ENCODE measurements at regions of chr7 and their contacts with region 1.

Region 1: GRCh38 chr7:23247603-23248335 is 1.2 kb downstream of the GPNMB start:
- DNase-seq: no peak
- H3K4me3 Mint-ChIP-seq: no peak overlapping the region
- H3K27ac Mint-ChIP-seq: no peak overlapping the region
- H3K4me1 Mint-ChIP-seq: peaks cover 18% of the 10 kb centered on the region
- H3K27me3 Mint-ChIP-seq: peaks cover 29% of the 10 kb centered on the region
- CTCF ChIP-seq: no peak

Region 2: GRCh38 chr7:23093546-23093945 is 154.2 kb before region 1 on chr7:
- CTCF ChIA-PET with region 1: no interaction called
- intact Hi-C with region 1: loop called (anchors 10 kb)
- DNase-seq: no peak
- H3K4me3 Mint-ChIP-seq: no peak overlapping the region
- H3K27ac Mint-ChIP-seq: no peak overlapping the region
- H3K4me1 Mint-ChIP-seq: no peaks in the 10 kb centered on the region
- H3K27me3 Mint-ChIP-seq: no peaks in the 10 kb centered on the region
- CTCF ChIP-seq: no peak

Region 3: DNA sequence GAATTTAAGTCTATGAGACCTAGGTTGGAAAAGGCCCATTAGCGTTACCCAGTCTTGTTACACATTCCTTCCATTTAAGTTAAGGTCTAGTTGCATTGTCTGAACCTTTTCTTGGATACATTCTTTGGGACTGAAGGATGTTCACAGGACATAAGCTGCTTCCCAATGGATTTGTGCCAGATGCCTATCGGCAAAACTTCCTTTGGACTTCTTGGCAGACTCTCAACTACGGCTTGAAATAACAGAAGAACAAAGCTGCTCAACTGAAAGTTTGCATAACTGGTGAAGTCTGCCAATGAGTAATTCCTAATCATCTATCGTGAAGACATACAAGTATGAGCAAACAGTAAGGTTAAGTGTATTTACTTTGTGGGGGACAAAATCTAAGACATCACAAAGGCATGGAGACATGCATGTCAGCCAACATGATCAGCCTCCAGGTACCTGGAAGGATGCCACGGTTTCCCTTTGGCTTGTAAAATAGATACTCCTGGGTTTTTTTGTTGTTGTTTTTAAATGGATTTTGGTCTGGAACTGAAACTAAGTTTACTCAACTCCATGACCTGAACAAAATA is 86.8 kb after region 1 on chr7:
- CTCF ChIA-PET with region 1: no interaction called
- intact Hi-C with region 1: no loop called
- DNase-seq: peak; percentile 73
- H3K4me3 Mint-ChIP-seq: peak overlapping the region; percentile 20
- H3K27ac Mint-ChIP-seq: peak overlapping the region; percentile 77
- H3K4me1 Mint-ChIP-seq: peaks cover 53% of the 10 kb centered on the region
- H3K27me3 Mint-ChIP-seq: no peaks in the 10 kb centered on the region
- CTCF ChIP-seq: no peak

Region 4: GRCh38 chr7:23357190-23358093 is 109.7 kb after region 1 on chr7:
- CTCF ChIA-PET with region 1: no interaction called
- intact Hi-C with region 1: no loop called
- DNase-seq: no peak
- H3K4me3 Mint-ChIP-seq: peak overlapping the region; percentile 30
- H3K27ac Mint-ChIP-seq: peak overlapping the region; percentile 47
- H3K4me1 Mint-ChIP-seq: peaks cover 39% of the 10 kb centered on the region
- H3K27me3 Mint-ChIP-seq: no peaks in the 10 kb centered on the region
- CTCF ChIP-seq: peak; percentile 50

Measured in Calu3 (cell line).